ENCODE measurements at regions of chr2 and their contacts with region 1.

Region 1: DNA sequence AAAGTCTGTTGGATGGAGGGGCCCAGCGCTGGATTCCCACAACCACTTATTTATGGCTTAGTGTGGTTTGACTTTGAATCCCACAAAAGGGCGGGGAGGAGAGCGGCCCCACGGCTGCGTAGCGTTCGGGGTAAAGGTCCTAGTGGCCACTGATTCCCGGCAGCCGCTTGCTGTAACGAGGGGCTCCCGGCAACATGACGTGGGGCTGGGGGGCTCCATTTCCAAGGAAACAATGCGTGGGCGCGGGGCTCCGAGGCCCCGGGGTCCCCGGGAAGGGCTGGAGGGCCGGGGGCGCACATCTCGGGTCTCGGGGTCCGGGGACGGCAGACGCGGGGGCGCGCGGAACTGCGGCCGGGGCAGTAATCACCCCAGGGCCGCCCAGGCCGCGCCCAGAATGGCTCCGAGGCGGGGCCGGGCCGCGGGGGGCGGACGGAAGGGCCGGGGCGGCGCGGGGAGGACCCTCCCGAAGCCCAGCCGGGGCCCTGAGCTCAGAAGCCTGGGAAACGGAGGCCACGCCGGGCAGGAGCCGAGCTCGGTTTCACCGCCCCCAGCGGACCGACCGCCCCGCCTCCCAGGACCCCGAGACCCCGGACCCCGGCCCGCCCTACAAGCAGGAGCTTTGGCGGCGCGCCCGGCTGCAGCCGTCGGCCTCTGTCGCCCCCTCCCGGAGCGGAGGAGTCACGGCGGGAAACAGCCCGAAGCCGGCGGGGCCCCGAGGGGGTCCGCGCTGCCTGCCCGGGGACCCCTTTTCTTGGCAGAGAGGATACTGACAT is 11.9 kb upstream of the MLPH start:
- DNase-seq: peak; percentile 75
- ATAC-seq: peak; percentile 85
- H3K4me3 Mint-ChIP-seq: peak overlapping the region; percentile 71
- H3K27ac Mint-ChIP-seq: peak overlapping the region; percentile 78
- H3K4me1 Mint-ChIP-seq: peaks cover 10% of the 10 kb centered on the region
- H3K27me3 Mint-ChIP-seq: peaks cover 20% of the 10 kb centered on the region
- CTCF ChIP-seq: peak; percentile 94

Region 2: DNA sequence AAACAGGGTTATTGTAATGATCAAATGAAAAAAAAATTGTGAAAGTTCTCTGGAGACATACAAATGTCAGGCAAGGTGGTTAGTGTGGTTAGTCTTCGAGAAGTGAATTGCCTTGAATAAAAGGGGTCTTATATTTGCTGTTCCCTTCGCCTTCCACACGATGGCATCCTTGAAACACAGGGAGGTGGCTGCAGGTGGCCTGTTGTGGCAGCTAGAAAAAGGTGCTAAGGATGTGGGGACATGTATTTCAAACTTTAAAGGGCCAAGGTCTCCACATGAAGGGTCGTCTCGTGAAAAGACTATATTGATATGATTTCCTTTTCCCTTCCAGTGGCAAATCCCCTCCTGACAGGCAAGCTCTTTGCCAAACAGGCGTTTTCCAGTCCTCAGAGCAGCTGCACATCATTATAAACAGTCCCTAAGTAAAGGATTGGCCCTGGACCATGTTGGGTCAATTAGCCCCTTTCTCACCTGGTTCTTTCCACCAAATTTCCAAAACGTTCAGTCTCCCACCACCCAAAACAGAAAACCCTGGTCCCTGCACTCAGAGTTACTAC is 321.0 kb before region 1 on chr2:
- CTCF ChIA-PET with region 1: interaction called, 20 read pairs
- POLR2A ChIA-PET with region 1: no interaction called
- intact Hi-C with region 1: loop called (anchors 5 kb)
- DNase-seq: peak; percentile 71
- ATAC-seq: peak; percentile 29
- H3K4me3 Mint-ChIP-seq: no peak overlapping the region
- H3K27ac Mint-ChIP-seq: peak overlapping the region; percentile 86
- H3K4me1 Mint-ChIP-seq: peaks cover 52% of the 10 kb centered on the region
- H3K27me3 Mint-ChIP-seq: no peaks in the 10 kb centered on the region
- CTCF ChIP-seq: peak; percentile 81

Region 3: DNA sequence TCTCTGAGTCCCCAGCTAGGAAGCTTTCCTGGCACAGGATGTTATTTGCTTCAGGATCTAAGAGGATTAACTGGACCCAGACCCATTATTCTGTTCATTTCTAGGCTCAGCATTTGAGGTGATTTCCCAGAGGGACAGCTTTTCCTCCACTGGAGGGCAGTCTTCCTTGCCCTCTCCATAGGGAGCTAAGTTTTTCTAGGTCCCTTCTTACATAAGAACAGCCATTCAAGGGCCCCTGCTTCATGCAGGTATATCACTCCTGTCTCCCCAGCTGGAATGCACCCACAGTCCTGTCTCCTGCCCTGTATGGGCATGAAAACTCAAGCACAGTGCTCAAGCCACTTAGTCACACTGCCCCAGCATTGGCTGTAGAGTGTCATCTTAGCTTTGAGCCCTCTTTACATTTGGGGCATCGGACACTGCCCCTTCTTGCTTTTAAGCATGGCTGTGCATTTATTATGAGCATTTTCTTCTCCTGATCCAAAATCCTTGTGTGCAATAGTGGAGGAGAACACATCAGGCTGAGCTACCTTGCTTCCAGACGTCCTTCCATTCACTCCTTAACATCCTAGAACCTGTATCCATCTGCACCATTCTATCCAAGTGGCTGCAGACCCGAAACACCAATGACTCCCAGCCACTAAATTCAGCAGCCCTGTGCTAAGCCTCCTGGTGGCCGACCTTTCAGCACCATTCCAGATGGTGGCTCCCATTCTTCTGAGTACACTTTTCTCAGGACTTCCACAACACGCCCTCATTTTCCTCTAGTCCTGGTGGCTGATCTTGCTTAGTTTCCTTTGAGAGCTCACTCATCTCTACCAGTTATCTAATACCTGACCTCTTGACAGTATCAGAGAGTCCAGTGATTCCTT is 309.5 kb before region 1 on chr2:
- CTCF ChIA-PET with region 1: interaction called, 10 read pairs
- POLR2A ChIA-PET with region 1: no interaction called
- intact Hi-C with region 1: no loop called
- DNase-seq: no peak
- ATAC-seq: no peak
- H3K4me3 Mint-ChIP-seq: no peak overlapping the region
- H3K27ac Mint-ChIP-seq: no peak overlapping the region
- H3K4me1 Mint-ChIP-seq: peaks cover 4% of the 10 kb centered on the region
- H3K27me3 Mint-ChIP-seq: peaks cover 12% of the 10 kb centered on the region
- CTCF ChIP-seq: peak; percentile 20

Region 4: DNA sequence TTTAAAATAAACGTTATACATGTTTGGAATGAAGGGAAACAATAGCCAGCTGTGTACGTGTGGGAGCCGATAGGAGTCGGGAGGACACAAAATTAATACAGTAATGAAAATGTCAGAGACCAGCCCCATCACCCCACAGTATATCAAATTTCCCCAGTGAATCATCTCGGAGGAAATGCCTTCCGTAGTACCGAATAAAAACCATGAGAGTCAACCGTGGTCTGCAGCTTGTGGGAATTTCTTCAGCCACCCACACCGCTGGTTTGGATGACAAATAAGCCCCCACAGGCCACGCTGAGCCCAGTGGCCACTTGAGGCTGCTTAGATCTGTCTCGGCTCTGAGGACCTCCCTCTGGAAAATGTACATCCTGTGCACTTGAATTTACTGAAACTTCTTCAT is 194.9 kb before region 1 on chr2:
- CTCF ChIA-PET with region 1: no interaction called
- POLR2A ChIA-PET with region 1: no interaction called
- intact Hi-C with region 1: no loop called
- DNase-seq: no peak
- ATAC-seq: no peak
- H3K4me3 Mint-ChIP-seq: no peak overlapping the region
- H3K27ac Mint-ChIP-seq: no peak overlapping the region
- H3K4me1 Mint-ChIP-seq: no peaks in the 10 kb centered on the region
- H3K27me3 Mint-ChIP-seq: peaks cover 14% of the 10 kb centered on the region
- CTCF ChIP-seq: no peak

Region 5: DNA sequence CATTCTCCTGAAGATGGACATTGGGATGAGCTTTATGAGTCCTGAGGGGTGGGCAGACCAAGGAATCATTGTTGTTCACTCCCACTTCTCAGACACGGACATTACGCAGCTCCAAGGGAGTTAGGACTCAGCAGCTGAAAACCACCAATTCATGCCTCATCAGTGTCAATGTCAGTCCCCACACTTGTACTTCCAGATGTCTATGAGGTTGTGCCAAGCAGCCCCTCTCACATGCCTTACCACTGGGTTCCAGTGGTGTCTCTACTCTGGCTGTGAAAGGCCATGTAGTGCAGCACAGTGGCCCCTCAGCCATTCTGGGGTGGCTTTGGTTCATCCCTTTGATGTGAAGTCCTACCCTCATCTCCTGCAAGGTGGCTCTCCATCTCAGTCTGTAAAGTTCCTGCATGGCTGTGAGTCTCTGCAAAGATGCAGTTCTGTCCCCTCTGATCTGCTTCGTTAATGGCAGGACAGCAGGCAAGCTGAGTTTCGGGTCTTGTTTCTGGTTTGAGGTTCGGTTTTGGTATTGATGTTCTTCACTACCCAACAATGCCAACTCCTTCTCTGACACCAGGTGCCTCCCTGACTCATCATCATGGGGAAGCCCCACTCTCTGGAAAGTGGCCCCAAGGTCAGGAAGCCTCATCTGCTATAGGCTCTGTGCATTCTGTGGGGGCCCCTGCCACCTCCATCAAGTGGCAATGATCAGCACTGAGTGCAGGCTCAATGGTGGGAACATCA is 47.2 kb before region 1 on chr2:
- CTCF ChIA-PET with region 1: interaction called, 257 read pairs
- POLR2A ChIA-PET with region 1: interaction called, 5 read pairs
- intact Hi-C with region 1: loop called (anchors 5 kb)
- DNase-seq: peak; percentile 95
- ATAC-seq: peak; percentile 79
- H3K4me3 Mint-ChIP-seq: peak overlapping the region; percentile 36
- H3K27ac Mint-ChIP-seq: peak overlapping the region; percentile 93
- H3K4me1 Mint-ChIP-seq: peaks cover 71% of the 10 kb centered on the region
- H3K27me3 Mint-ChIP-seq: peaks cover 1% of the 10 kb centered on the region
- CTCF ChIP-seq: no peak

Region 6: DNA sequence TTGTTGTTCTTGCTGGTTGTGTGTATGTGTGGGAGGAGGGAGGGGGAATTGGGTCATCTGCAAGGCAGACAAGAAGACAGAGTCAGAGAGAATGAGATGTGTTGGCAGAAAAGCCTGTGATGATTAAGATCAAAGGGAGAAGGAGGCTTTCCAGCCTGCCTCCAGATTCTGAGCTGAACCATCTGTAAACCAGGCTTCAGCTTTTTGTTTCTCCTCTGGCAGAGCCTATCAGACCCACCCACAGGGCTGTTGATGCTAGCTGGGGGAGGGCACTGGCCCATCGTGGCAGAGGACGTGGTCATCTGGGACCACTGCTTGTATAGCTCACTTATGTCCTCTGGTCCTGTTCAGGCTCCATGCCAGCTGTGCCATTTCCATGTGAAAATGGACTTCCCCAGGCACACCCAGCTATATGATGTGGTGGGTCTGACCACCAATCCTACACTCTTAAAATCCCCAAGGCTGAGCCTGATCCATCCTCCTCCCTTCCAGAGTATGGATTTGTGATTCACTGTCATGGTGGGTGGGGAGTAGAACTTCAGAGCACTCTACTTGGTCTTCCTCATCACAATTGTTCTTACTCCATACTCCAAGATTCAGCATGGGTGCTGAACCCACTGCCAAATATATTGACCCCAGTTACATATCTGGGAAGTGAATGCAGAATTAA is 33.4 kb before region 1 on chr2:
- CTCF ChIA-PET with region 1: interaction called, 13 read pairs
- POLR2A ChIA-PET with region 1: no interaction called
- intact Hi-C with region 1: no loop called
- DNase-seq: peak; percentile 55
- ATAC-seq: peak; percentile 65
- H3K4me3 Mint-ChIP-seq: peak overlapping the region; percentile 24
- H3K27ac Mint-ChIP-seq: peak overlapping the region; percentile 78
- H3K4me1 Mint-ChIP-seq: peaks cover 55% of the 10 kb centered on the region
- H3K27me3 Mint-ChIP-seq: no peaks in the 10 kb centered on the region
- CTCF ChIP-seq: no peak

Region 7: DNA sequence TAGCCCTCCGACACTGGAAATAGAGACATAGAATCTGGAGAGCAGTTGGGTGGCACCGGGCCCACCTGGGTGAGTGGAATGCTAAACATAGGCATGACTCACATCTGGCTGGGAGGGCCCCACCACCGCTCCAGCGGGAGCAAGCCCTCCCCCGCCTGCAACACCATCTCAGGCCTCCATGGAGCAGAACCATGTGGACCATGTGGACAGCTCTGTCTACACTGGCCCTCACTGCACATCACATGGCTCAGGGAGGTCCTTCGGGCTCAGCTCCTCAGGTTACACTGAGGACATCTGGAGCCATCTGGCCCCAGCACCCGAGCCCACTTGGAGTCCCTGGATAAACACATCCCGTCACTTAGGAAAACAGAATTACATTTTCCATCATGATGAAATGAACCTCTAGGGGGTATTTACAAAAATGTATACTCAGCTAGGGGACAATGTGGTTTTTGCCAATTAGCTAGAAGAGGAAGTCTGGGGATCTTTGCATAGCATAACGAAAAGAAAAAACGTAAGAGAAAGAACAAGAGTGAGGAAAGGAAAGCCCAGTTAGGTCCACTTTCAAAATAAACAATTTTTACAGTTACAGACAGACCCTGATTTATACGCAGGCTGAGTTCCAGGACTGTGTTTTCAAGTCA is 18.8 kb before region 1 on chr2:
- CTCF ChIA-PET with region 1: interaction called, 10 read pairs
- POLR2A ChIA-PET with region 1: no interaction called
- intact Hi-C with region 1: no loop called
- DNase-seq: no peak
- ATAC-seq: no peak
- H3K4me3 Mint-ChIP-seq: no peak overlapping the region
- H3K27ac Mint-ChIP-seq: no peak overlapping the region
- H3K4me1 Mint-ChIP-seq: peaks cover 17% of the 10 kb centered on the region
- H3K27me3 Mint-ChIP-seq: no peaks in the 10 kb centered on the region
- CTCF ChIP-seq: no peak

Region 8: DNA sequence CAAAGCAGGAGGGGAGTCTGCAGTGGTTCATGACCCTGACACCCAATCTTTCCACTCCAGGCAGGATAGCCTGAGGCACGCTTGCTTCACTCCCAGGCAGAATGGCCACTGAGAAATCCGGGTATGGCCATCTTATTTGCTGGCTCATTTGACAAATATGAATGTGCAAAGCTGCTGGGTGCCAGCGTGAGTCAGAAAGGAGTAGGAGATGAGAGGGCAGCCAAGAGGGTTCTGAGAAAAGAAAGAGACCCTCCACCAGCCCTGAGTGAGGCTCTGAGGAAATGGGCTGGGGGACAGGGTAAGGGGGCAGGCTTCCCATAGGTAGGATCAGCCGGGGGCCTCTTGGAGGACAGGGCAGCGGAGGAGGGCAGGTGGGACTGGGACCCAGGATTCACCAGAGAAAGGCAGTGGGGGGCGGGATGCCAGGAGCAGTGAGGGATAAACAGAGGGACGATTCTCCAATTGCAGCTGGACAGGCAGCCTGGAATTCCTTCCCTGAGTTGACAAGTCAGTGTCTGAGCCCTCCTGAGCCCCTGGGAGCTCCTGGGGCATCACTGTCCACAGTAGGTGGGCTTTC is 399.6 kb after region 1 on chr2:
- CTCF ChIA-PET with region 1: no interaction called
- POLR2A ChIA-PET with region 1: no interaction called
- intact Hi-C with region 1: no loop called
- DNase-seq: no peak
- ATAC-seq: no peak
- H3K4me3 Mint-ChIP-seq: no peak overlapping the region
- H3K27ac Mint-ChIP-seq: no peak overlapping the region
- H3K4me1 Mint-ChIP-seq: peaks cover 7% of the 10 kb centered on the region
- H3K27me3 Mint-ChIP-seq: peaks cover 9% of the 10 kb centered on the region
- CTCF ChIP-seq: no peak

Measured in activated CD8-positive, alpha-beta T cell treated with anti-CD3 and anti-CD28 coated beads for 36 hours (primary cell).